ENCODE measurements at regions of chr14 and their contacts with region 1.

Region 1: DNA sequence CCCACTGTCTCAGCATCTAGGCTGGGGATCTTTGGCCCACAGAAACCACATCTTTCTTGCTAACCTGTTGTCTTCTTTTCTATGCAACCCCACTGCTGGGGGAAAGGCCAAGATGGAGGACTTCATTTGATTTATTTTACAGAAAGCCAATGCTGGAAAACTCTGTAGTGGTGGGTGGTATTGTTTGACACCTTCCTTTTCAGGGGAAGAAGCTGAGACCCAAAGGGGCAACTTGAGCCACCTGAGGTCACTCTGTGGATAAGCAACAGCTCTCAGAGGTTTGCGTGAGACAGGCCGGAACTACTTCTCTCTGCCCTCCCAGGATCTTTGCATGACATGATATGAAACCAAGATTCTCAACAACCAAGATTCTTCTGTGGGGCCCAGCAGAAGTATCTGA is 645.2 kb downstream of the VRK1 start:
- DNase-seq: peak; percentile 21
- ATAC-seq: peak; percentile 67
- H3K4me3 ChIP-seq: no peak overlapping the region
- H3K27ac ChIP-seq: peak overlapping the region; percentile 38
- H3K4me1 ChIP-seq: no peaks in the 10 kb centered on the region
- H3K27me3 ChIP-seq: no peaks in the 10 kb centered on the region
- CTCF ChIP-seq: no peak
- EP300 ChIP-seq: peak; percentile 65 to 74; a peak in 3 of 4 replicates
- POLR2A ChIP-seq: no peak
- RAD21 ChIP-seq: peak; percentile 27; the same call in 1 of the 2 replicates

Region 2: GRCh38 chr14:97417331-97417730 is 25.0 kb before region 1 on chr14:
- CTCF ChIA-PET with region 1: interaction called, 3 read pairs
- POLR2A ChIA-PET with region 1: interaction called, 8 read pairs
- RAD21 ChIA-PET with region 1: interaction called, 11 read pairs
- SMC1A ChIA-PET with region 1: interaction called, 88 read pairs
- in situ Hi-C with region 1: no loop called
- intact Hi-C with region 1: loop called (anchors 2 kb)
- DNase-seq: no peak
- ATAC-seq: peak; percentile 38
- H3K4me3 ChIP-seq: no peak overlapping the region
- H3K27ac ChIP-seq: no peak overlapping the region
- H3K4me1 ChIP-seq: peaks cover 3% of the 10 kb centered on the region; the same call in 1 of the 2 replicates
- H3K27me3 ChIP-seq: no peaks in the 10 kb centered on the region
- CTCF ChIP-seq: no peak
- EP300 ChIP-seq: no peak
- POLR2A ChIP-seq: no peak
- RAD21 ChIP-seq: no peak

Region 3: GRCh38 chr14:97426776-97427282 is 15.5 kb before region 1 on chr14:
- CTCF ChIA-PET with region 1: interaction called, 3 read pairs
- POLR2A ChIA-PET with region 1: interaction called, 5 read pairs
- RAD21 ChIA-PET with region 1: interaction called, 5 read pairs
- SMC1A ChIA-PET with region 1: interaction called, 88 read pairs
- in situ Hi-C with region 1: no loop called
- intact Hi-C with region 1: no loop called
- DNase-seq: no peak
- ATAC-seq: no peak
- H3K4me3 ChIP-seq: no peak overlapping the region
- H3K27ac ChIP-seq: no peak overlapping the region
- H3K4me1 ChIP-seq: no peaks in the 10 kb centered on the region
- H3K27me3 ChIP-seq: no peaks in the 10 kb centered on the region
- CTCF ChIP-seq: no peak
- EP300 ChIP-seq: no peak
- POLR2A ChIP-seq: no peak
- RAD21 ChIP-seq: no peak

Region 4: GRCh38 chr14:97458661-97459579 is 16.6 kb after region 1 on chr14:
- CTCF ChIA-PET with region 1: interaction called, 6 read pairs
- POLR2A ChIA-PET with region 1: interaction called, 4 read pairs
- RAD21 ChIA-PET with region 1: interaction called, 5 read pairs
- SMC1A ChIA-PET with region 1: interaction called, 33 read pairs
- in situ Hi-C with region 1: no loop called
- intact Hi-C with region 1: no loop called
- DNase-seq: no peak
- ATAC-seq: peak; percentile 47
- H3K4me3 ChIP-seq: no peak overlapping the region
- H3K27ac ChIP-seq: no peak overlapping the region
- H3K4me1 ChIP-seq: peaks cover 11% of the 10 kb centered on the region
- H3K27me3 ChIP-seq: no peaks in the 10 kb centered on the region
- CTCF ChIP-seq: no peak
- EP300 ChIP-seq: no peak
- POLR2A ChIP-seq: no peak
- RAD21 ChIP-seq: no peak

Region 5: DNA sequence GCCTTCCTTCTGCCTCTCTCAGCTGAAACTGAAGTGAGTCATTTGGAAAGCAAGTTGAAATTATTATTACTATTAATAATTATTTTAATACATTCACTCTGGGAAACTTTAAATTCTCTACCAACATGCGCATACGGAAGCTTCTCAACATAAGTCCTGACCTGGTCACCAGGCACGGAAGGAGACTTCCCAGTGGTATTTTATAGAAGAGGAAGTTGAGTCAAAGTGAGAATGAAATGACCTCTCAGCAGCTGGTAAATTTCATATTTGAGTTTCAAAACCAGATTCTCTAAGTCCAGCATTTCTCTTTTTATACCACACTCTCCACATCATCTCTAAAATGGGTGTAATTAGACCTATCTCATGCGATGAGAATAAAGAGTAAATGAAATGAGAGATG is 102.2 kb after region 1 on chr14:
- CTCF ChIA-PET with region 1: no interaction called
- POLR2A ChIA-PET with region 1: no interaction called
- RAD21 ChIA-PET with region 1: interaction called, 4 read pairs
- SMC1A ChIA-PET with region 1: interaction called, 3 read pairs
- in situ Hi-C with region 1: no loop called
- intact Hi-C with region 1: loop called (anchors 2 kb)
- DNase-seq: peak; percentile 21
- ATAC-seq: peak; percentile 68
- H3K4me3 ChIP-seq: no peak overlapping the region
- H3K27ac ChIP-seq: peak overlapping the region; percentile 9; the same call in 1 of the 2 replicates
- H3K4me1 ChIP-seq: peaks cover 6% of the 10 kb centered on the region
- H3K27me3 ChIP-seq: no peaks in the 10 kb centered on the region
- CTCF ChIP-seq: no peak
- EP300 ChIP-seq: peak in 1 of 2 experiments; percentile 47; a peak in 1 of 4 replicates
- POLR2A ChIP-seq: no peak
- RAD21 ChIP-seq: no peak

Region 6: DNA sequence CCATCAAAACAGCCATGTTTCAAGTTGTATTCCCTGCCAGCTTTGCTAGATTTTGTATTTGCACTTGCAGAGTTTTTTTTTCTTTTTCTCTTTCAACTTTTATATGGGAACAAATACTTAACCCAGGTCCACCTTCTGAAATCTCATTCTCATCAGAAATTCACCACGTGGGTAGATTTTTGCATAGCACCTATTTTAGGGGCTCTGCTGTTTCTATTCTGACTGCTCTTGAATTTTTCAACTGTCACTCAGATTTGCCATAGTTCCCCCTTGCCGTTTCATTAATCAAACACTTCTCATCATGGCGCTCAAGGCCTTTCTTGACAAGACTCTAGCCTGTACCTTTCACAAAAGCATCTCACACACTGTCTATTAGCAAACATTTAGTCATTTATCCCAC is 122.0 kb after region 1 on chr14:
- CTCF ChIA-PET with region 1: no interaction called
- POLR2A ChIA-PET with region 1: no interaction called
- RAD21 ChIA-PET with region 1: no interaction called
- SMC1A ChIA-PET with region 1: no interaction called
- in situ Hi-C with region 1: no loop called
- intact Hi-C with region 1: no loop called
- DNase-seq: no peak
- ATAC-seq: no peak
- H3K4me3 ChIP-seq: no peak overlapping the region
- H3K27ac ChIP-seq: no peak overlapping the region
- H3K4me1 ChIP-seq: 0 out of 2 replicates have a peak, but pooled peaks cover 4% of the 10 kb centered on the region
- H3K27me3 ChIP-seq: no peaks in the 10 kb centered on the region
- CTCF ChIP-seq: no peak
- EP300 ChIP-seq: no peak
- POLR2A ChIP-seq: no peak
- RAD21 ChIP-seq: no peak

Measured in GM12878 (cell line).